Activated CD4-positive, alpha-beta memory T cell treated with anti-CD3 and anti-CD28 coated beads for 36 hours (primary cell): ENCODE measurements at regions of chr14 and their contacts with region 1.

Region 1: GRCh38 chr14:91223028-91223783 is 21.3 kb downstream of the GPR68 start:
- DNase-seq: peak; percentile 51
- H3K4me3 Mint-ChIP-seq: no peak overlapping the region
- H3K27ac Mint-ChIP-seq: peak overlapping the region; percentile 80
- H3K4me1 Mint-ChIP-seq: peaks cover 76% of the 10 kb centered on the region
- H3K27me3 Mint-ChIP-seq: no peaks in the 10 kb centered on the region

Region 2: GRCh38 chr14:91029456-91030217 is 193.6 kb before region 1 on chr14:
- CTCF ChIA-PET with region 1: no interaction called
- POLR2A ChIA-PET with region 1: no interaction called
- intact Hi-C with region 1: no loop called
- DNase-seq: no peak
- H3K4me3 Mint-ChIP-seq: no peak overlapping the region
- H3K27ac Mint-ChIP-seq: peak overlapping the region; percentile 38
- H3K4me1 Mint-ChIP-seq: peaks cover 56% of the 10 kb centered on the region
- H3K27me3 Mint-ChIP-seq: no peaks in the 10 kb centered on the region

Region 3: GRCh38 chr14:91138511-91139359 is 84.5 kb before region 1 on chr14:
- CTCF ChIA-PET with region 1: no interaction called
- POLR2A ChIA-PET with region 1: no interaction called
- intact Hi-C with region 1: no loop called
- DNase-seq: peak; percentile 74
- H3K4me3 Mint-ChIP-seq: no peak overlapping the region
- H3K27ac Mint-ChIP-seq: peak overlapping the region; percentile 77
- H3K4me1 Mint-ChIP-seq: peaks cover 51% of the 10 kb centered on the region
- H3K27me3 Mint-ChIP-seq: no peaks in the 10 kb centered on the region

Region 4: DNA sequence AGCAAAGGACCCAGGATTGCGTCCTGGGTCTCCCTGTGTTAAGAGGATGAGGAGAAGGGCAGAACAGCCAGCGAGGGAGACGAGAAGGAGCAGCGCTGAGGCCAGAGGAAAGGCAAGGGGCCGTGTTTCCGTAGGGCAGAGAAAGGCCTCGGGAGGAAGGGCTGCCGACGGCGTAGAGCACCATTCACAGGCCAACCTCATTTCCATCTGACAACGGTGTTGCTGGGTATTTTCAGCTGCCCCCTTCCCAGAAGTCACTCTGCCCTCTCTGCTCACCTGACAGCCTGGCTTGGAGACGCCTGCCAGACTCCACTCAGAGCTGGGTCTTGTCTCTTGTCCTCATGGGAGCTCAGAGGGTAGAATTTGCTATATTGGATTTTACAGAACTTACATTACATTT is 30.1 kb before region 1 on chr14:
- CTCF ChIA-PET with region 1: no interaction called
- POLR2A ChIA-PET with region 1: interaction called, 5 read pairs
- intact Hi-C with region 1: loop called (anchors 1 kb)
- DNase-seq: no peak
- H3K4me3 Mint-ChIP-seq: no peak overlapping the region
- H3K27ac Mint-ChIP-seq: no peak overlapping the region
- H3K4me1 Mint-ChIP-seq: peaks cover 15% of the 10 kb centered on the region
- H3K27me3 Mint-ChIP-seq: no peaks in the 10 kb centered on the region